Naive thymus-derived CD4-positive, alpha-beta T cell (primary cell): ENCODE measurements at regions of chr1 and their contacts with region 1.

Region 1: GRCh38 chr1:24744911-24745710 is at the start of gene CLIC4:
- DNase-seq: peak; percentile 97 to 100 (median 98)
- ATAC-seq: peak; percentile 97
- H3K4me3 ChIP-seq: peak within 1 kb of the TSS; percentile 55
- H3K4me3 Mint-ChIP-seq: peak within 1 kb of the TSS; percentile 84 to 94 (median 89)
- H3K27ac ChIP-seq: peak within 1 kb of the TSS; percentile 57
- H3K27ac Mint-ChIP-seq: peak within 1 kb of the TSS; percentile 18 to 89 (median 79)
- H3K4me1 ChIP-seq: peaks cover 0 to 4% of the 10 kb centered on the region in 2 donors
- H3K4me1 Mint-ChIP-seq: peaks cover 7 to 57% (median 15%) of the 10 kb centered on the region in 7 donors
- H3K27me3 ChIP-seq: no peaks in the 10 kb centered on the region
- H3K27me3 Mint-ChIP-seq: peaks cover 0 to 10% (median 0%) of the 10 kb centered on the region in 5 donors
- total RNA-seq, gene CLIC4: 1.4 to 16.8 (median 5.1) TPM

Region 2: DNA sequence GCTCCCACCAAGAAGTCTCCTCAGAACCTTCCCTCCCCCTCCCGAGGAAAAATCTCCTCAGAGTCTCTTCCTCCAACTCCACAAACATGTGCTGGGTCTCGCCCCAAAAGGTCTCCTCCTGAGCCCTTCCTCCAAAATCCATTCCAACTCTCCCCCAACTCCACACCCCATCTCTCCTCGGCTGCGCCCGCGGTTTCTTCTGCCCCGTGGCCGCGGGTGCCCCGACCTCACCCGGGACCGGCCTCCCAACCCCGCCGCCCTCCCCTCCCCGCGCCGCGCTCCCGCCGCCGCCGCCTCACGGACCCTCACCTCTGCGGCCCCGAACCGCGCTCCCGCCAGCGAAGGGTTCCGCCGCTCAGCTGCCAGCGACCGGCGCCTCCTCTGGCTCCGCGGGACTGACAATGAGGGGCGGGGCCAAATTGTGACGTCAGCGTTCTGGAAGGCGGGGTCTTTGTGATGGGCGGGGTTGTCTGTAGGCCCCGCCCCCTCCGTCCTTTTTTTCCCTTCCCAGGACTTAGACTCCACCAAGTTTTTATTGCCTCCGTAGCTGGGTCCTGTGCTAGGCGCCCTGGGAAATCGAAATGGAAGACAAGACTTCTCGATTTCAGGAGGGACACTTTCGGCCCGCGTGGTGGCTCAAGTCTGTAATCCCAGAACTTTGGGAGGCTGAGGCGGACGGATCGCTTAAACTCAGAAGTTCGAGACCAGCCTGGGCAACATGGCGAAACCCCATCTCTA is 1576.5 kb before region 1 on chr1 and contains the start of gene LUZP1:
- CTCF ChIA-PET with region 1: no interaction called
- POLR2A ChIA-PET with region 1: no interaction called
- intact Hi-C with region 1: loop called in 1 of 2 experiments (anchors 5 kb)
- DNase-seq: peak; percentile 73 to 91 (median 84)
- ATAC-seq: peak; percentile 96
- H3K4me3 ChIP-seq: peak within 1 kb of the TSS; percentile 90
- H3K4me3 Mint-ChIP-seq: peak within 1 kb of the TSS; percentile 84 to 99 (median 96)
- H3K27ac ChIP-seq: peak within 1 kb of the TSS; percentile 84
- H3K27ac Mint-ChIP-seq: peak within 1 kb of the TSS; percentile 57 to 94 (median 87)
- H3K4me1 ChIP-seq: peaks cover 7 to 16% of the 10 kb centered on the region in 2 donors
- H3K4me1 Mint-ChIP-seq: peaks cover 18 to 48% (median 38%) of the 10 kb centered on the region in 7 donors
- H3K27me3 ChIP-seq: no peaks in the 10 kb centered on the region
- H3K27me3 Mint-ChIP-seq: peaks cover 0 to 4% (median 0%) of the 10 kb centered on the region in 5 donors
- total RNA-seq, gene LUZP1: 14.8 to 22.9 (median 16.9) TPM

Region 3: DNA sequence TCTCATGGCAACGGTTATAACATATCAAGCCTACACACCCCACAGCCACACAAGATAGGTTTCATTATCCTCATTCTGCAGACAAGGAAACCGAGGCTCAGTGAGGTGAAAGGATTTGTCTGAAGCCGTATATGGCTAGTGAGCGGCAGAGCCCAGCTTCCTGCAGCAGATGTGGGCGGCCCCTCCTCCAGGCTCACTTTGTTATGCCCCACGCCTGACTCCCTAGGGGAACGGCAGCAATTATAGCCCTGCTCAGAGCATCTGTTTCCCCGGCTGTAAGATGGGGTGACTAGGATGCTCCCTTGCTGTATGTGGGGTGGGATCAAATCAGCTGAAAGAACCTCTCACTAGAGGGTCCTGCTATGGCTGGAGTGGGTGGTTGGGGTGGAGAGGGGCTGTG is 403.9 kb before region 1 on chr1:
- CTCF ChIA-PET with region 1: no interaction called
- POLR2A ChIA-PET with region 1: no interaction called
- intact Hi-C with region 1: no loop called
- DNase-seq: no peak
- ATAC-seq: no peak
- H3K4me3 ChIP-seq: no peak overlapping the region
- H3K4me3 Mint-ChIP-seq: no peak overlapping the region
- H3K27ac ChIP-seq: no peak overlapping the region
- H3K27ac Mint-ChIP-seq: no peak overlapping the region
- H3K4me1 ChIP-seq: no peaks in the 10 kb centered on the region
- H3K4me1 Mint-ChIP-seq: peaks cover 0 to 8% (median 0%) of the 10 kb centered on the region in 7 donors
- H3K27me3 ChIP-seq: no peaks in the 10 kb centered on the region
- H3K27me3 Mint-ChIP-seq: peaks cover 0 to 23% (median 0%) of the 10 kb centered on the region in 5 donors

Region 4: GRCh38 chr1:24536391-24536840 is 208.7 kb before region 1 on chr1:
- CTCF ChIA-PET with region 1: no interaction called
- POLR2A ChIA-PET with region 1: no interaction called
- intact Hi-C with region 1: loop called in 1 of 2 experiments (anchors 1 kb)
- DNase-seq: peak; percentile 41 to 92 (median 87)
- ATAC-seq: peak; percentile 90
- H3K4me3 ChIP-seq: no peak overlapping the region
- H3K4me3 Mint-ChIP-seq: peak overlapping the region; percentile 79 to 91 (median 84)
- H3K27ac ChIP-seq: peak overlapping the region; percentile 96
- H3K27ac Mint-ChIP-seq: peak overlapping the region; percentile 93 to 100 (median 99)
- H3K4me1 ChIP-seq: peaks cover 30 to 38% of the 10 kb centered on the region in 2 donors
- H3K4me1 Mint-ChIP-seq: peaks cover 29 to 90% (median 70%) of the 10 kb centered on the region in 7 donors
- H3K27me3 ChIP-seq: no peaks in the 10 kb centered on the region
- H3K27me3 Mint-ChIP-seq: no peaks in the 10 kb centered on the region

Region 5: DNA sequence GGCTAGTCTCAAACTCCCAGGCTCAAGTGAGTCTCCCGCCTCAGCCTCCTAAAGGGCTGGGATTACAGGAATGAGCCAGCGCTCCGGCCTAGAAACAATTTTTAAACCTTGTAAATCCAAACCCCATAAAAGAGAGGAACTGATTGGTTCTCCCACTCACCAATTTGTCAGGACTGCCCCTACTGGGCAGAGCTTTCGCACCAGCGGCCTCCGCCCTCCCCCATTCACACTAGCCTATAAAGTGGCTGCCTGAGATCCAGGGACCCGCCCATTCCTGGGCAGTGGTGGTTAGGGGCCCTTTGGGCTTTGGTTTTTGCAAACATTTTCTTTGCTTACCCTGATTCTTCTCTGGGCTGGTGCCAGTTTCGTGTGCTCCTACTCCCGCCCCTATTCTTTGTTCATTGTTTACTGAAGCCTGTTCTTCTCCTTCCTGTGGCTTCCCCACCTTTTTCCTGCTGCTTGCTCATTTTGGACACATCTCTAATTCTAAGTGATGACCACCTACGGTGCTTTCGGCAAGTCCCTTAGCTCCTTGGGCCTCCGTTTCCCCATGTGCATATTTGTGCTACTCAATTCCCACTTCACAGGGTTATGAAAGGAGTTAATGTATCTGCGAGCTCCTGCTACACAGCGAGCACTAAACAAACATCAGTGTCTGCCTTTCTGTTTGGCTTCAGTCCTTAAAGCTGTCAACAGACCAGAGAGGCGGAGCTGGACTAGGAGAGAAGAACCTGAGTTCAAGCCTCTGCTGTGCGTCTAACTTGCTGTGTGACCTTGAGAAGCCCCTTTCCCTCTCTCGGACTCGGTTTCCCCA is 39.6 kb before region 1 on chr1:
- CTCF ChIA-PET with region 1: no interaction called
- POLR2A ChIA-PET with region 1: no interaction called
- intact Hi-C with region 1: loop called in 1 of 2 experiments (anchors 5 kb)
- DNase-seq: peak in 6 of 9 donors; percentile 7 to 39 (median 22)
- ATAC-seq: peak; percentile 92
- H3K4me3 ChIP-seq: no peak overlapping the region
- H3K4me3 Mint-ChIP-seq: peak overlapping the region in 8 of 10 donors; percentile 46 to 69 (median 54)
- H3K27ac ChIP-seq: no peak overlapping the region
- H3K27ac Mint-ChIP-seq: peak overlapping the region in 5 of 9 donors; percentile 46 to 60 (median 49)
- H3K4me1 ChIP-seq: no peaks in the 10 kb centered on the region
- H3K4me1 Mint-ChIP-seq: peaks cover 7 to 32% (median 12%) of the 10 kb centered on the region in 7 donors
- H3K27me3 ChIP-seq: no peaks in the 10 kb centered on the region
- H3K27me3 Mint-ChIP-seq: no peaks in the 10 kb centered on the region

Region 6: GRCh38 chr1:24715658-24716057 is 29.5 kb before region 1 on chr1:
- CTCF ChIA-PET with region 1: no interaction called
- POLR2A ChIA-PET with region 1: no interaction called
- intact Hi-C with region 1: no loop called
- DNase-seq: no peak
- ATAC-seq: no peak
- H3K4me3 ChIP-seq: no peak overlapping the region
- H3K4me3 Mint-ChIP-seq: no peak overlapping the region
- H3K27ac ChIP-seq: no peak overlapping the region
- H3K27ac Mint-ChIP-seq: no peak overlapping the region
- H3K4me1 ChIP-seq: no peaks in the 10 kb centered on the region
- H3K4me1 Mint-ChIP-seq: no peaks in the 10 kb centered on the region
- H3K27me3 ChIP-seq: no peaks in the 10 kb centered on the region
- H3K27me3 Mint-ChIP-seq: no peaks in the 10 kb centered on the region

Region 7: GRCh38 chr1:24793447-24794131 is 48.5 kb after region 1 on chr1:
- CTCF ChIA-PET with region 1: no interaction called
- POLR2A ChIA-PET with region 1: no interaction called
- intact Hi-C with region 1: no loop called
- DNase-seq: no peak
- ATAC-seq: no peak
- H3K4me3 ChIP-seq: no peak overlapping the region
- H3K4me3 Mint-ChIP-seq: no peak overlapping the region
- H3K27ac ChIP-seq: no peak overlapping the region
- H3K27ac Mint-ChIP-seq: peak overlapping the region in 1 of 9 donors; percentile 20
- H3K4me1 ChIP-seq: no peaks in the 10 kb centered on the region
- H3K4me1 Mint-ChIP-seq: no peaks in the 10 kb centered on the region
- H3K27me3 ChIP-seq: no peaks in the 10 kb centered on the region
- H3K27me3 Mint-ChIP-seq: no peaks in the 10 kb centered on the region

Region 8: GRCh38 chr1:24830680-24831272 is 85.7 kb after region 1 on chr1:
- CTCF ChIA-PET with region 1: interaction called, 5 read pairs
- POLR2A ChIA-PET with region 1: no interaction called
- intact Hi-C with region 1: loop called in 1 of 2 experiments (anchors 2 kb)
- DNase-seq: peak in 7 of 9 donors; percentile 17 to 54 (median 48)
- ATAC-seq: peak; percentile 67
- H3K4me3 ChIP-seq: no peak overlapping the region
- H3K4me3 Mint-ChIP-seq: no peak overlapping the region
- H3K27ac ChIP-seq: no peak overlapping the region
- H3K27ac Mint-ChIP-seq: no peak overlapping the region
- H3K4me1 ChIP-seq: no peaks in the 10 kb centered on the region
- H3K4me1 Mint-ChIP-seq: peaks cover 0 to 7% (median 0%) of the 10 kb centered on the region in 7 donors
- H3K27me3 ChIP-seq: no peaks in the 10 kb centered on the region
- H3K27me3 Mint-ChIP-seq: peaks cover 0 to 5% (median 0%) of the 10 kb centered on the region in 5 donors

Region 9: GRCh38 chr1:24897767-24898483 is 152.8 kb after region 1 on chr1:
- CTCF ChIA-PET with region 1: no interaction called
- POLR2A ChIA-PET with region 1: no interaction called
- intact Hi-C with region 1: no loop called
- DNase-seq: peak in 4 of 9 donors; percentile 24 to 51 (median 28)
- ATAC-seq: peak; percentile 66
- H3K4me3 ChIP-seq: no peak overlapping the region
- H3K4me3 Mint-ChIP-seq: no peak overlapping the region
- H3K27ac ChIP-seq: no peak overlapping the region
- H3K27ac Mint-ChIP-seq: peak overlapping the region in 3 of 9 donors; percentile 66 to 74 (median 69)
- H3K4me1 ChIP-seq: peaks cover 0 to 24% of the 10 kb centered on the region in 2 donors
- H3K4me1 Mint-ChIP-seq: peaks cover 9 to 40% (median 18%) of the 10 kb centered on the region in 7 donors
- H3K27me3 ChIP-seq: no peaks in the 10 kb centered on the region
- H3K27me3 Mint-ChIP-seq: no peaks in the 10 kb centered on the region

Region 10: GRCh38 chr1:25239681-25240541 is 494.8 kb after region 1 on chr1:
- CTCF ChIA-PET with region 1: no interaction called
- POLR2A ChIA-PET with region 1: no interaction called
- intact Hi-C with region 1: loop called in 1 of 2 experiments (anchors 10 kb)
- DNase-seq: peak; percentile 72 to 91 (median 79)
- ATAC-seq: peak; percentile 92
- H3K4me3 ChIP-seq: peak overlapping the region; percentile 28
- H3K4me3 Mint-ChIP-seq: peak overlapping the region; percentile 87 to 93 (median 91)
- H3K27ac ChIP-seq: peak overlapping the region; percentile 80
- H3K27ac Mint-ChIP-seq: peak overlapping the region; percentile 89 to 98 (median 97)
- H3K4me1 ChIP-seq: peaks cover 33 to 37% of the 10 kb centered on the region in 2 donors
- H3K4me1 Mint-ChIP-seq: peaks cover 23 to 74% (median 63%) of the 10 kb centered on the region in 7 donors
- H3K27me3 ChIP-seq: no peaks in the 10 kb centered on the region
- H3K27me3 Mint-ChIP-seq: no peaks in the 10 kb centered on the region

Region 11: GRCh38 chr1:25430666-25431505 is 685.8 kb after region 1 on chr1 and contains the start of gene MACO1:
- CTCF ChIA-PET with region 1: no interaction called
- POLR2A ChIA-PET with region 1: no interaction called
- intact Hi-C with region 1: loop called in 1 of 2 experiments (anchors 5 kb)
- DNase-seq: peak; percentile 93 to 99 (median 98)
- ATAC-seq: peak; percentile 91
- H3K4me3 ChIP-seq: peak within 1 kb of the TSS; percentile 100
- H3K4me3 Mint-ChIP-seq: peak within 1 kb of the TSS; percentile 93 to 99 (median 98)
- H3K27ac ChIP-seq: peak within 1 kb of the TSS; percentile 96
- H3K27ac Mint-ChIP-seq: peak within 1 kb of the TSS; percentile 96 to 100 (median 100)
- H3K4me1 ChIP-seq: peaks cover 30 to 33% of the 10 kb centered on the region in 2 donors
- H3K4me1 Mint-ChIP-seq: peaks cover 32 to 55% (median 48%) of the 10 kb centered on the region in 7 donors
- H3K27me3 ChIP-seq: no peaks in the 10 kb centered on the region
- H3K27me3 Mint-ChIP-seq: peaks cover 0 to 3% (median 0%) of the 10 kb centered on the region in 5 donors
- total RNA-seq, gene MACO1: 16.7 to 25.9 (median 22.0) TPM